ENCODE measurements at regions of chr7 and their contacts with region 1.

Region 1: DNA sequence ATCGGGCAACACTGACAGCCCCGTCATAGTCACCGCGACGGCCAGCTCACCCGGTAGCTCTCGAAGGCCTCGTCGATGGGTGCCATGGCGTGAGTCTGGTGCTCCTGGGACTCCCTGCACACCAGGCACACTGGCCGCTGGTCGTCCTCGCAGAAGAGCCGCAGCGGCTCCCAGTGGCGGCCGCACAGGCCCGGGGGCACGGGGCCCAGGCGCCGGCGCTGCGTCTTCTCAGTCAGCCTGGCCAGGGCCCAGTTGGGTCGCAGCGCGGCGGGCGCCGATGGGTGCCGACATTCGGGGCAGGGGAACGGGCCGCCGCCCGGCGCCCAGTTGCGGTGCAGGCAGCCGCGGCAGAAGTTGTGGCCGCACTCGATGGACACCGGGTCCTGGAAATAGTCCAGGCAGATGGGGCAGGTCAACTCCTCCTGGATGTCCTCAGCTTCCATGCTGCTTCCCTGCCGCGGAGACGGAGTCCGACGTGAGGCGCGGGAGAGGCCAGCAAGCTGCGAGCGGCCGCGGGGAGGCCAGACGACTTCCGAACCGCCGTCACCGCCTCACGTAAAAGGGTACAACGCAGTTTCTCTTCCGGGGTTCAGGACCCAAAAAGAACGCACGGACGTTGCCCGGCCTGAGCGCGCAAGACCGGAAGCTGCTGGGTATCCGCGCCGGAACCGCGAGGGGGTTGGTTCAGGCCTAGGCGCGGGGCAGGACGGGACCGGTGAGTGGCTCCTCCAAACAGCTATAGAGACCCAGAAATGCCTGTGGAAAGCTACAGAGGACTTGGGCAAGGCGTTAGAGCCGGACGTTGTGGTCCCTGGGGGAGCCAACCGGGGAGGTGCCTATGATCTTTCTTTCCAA is at the start of gene TRIM4:
- DNase-seq: peak; percentile 96
- H3K4me3 Mint-ChIP-seq: peak within 1 kb of the TSS; percentile 90
- H3K27ac Mint-ChIP-seq: peak within 1 kb of the TSS; percentile 93
- H3K4me1 Mint-ChIP-seq: peaks cover 38% of the 10 kb centered on the region
- H3K27me3 Mint-ChIP-seq: no peaks in the 10 kb centered on the region
- total RNA-seq, gene TRIM4: 25.7 to 25.8 TPM

Region 2: GRCh38 chr7:99504603-99505323 is 414.4 kb before region 1 on chr7 and contains the start of gene ZKSCAN5:
- CTCF ChIA-PET with region 1: interaction called, 3 read pairs
- intact Hi-C with region 1: loop called (anchors 2 kb)
- DNase-seq: peak; percentile 98
- H3K4me3 Mint-ChIP-seq: peak within 1 kb of the TSS; percentile 87
- H3K27ac Mint-ChIP-seq: peak within 1 kb of the TSS; percentile 98
- H3K4me1 Mint-ChIP-seq: peaks cover 25% of the 10 kb centered on the region
- H3K27me3 Mint-ChIP-seq: no peaks in the 10 kb centered on the region
- total RNA-seq, gene ZKSCAN5: 7.2 to 8.0 TPM

Region 3: GRCh38 chr7:99798972-99799371 is 120.2 kb before region 1 on chr7:
- CTCF ChIA-PET with region 1: no interaction called
- intact Hi-C with region 1: no loop called
- DNase-seq: no peak
- H3K4me3 Mint-ChIP-seq: no peak overlapping the region
- H3K27ac Mint-ChIP-seq: no peak overlapping the region
- H3K4me1 Mint-ChIP-seq: no peaks in the 10 kb centered on the region
- H3K27me3 Mint-ChIP-seq: peaks cover 18% of the 10 kb centered on the region

Region 4: DNA sequence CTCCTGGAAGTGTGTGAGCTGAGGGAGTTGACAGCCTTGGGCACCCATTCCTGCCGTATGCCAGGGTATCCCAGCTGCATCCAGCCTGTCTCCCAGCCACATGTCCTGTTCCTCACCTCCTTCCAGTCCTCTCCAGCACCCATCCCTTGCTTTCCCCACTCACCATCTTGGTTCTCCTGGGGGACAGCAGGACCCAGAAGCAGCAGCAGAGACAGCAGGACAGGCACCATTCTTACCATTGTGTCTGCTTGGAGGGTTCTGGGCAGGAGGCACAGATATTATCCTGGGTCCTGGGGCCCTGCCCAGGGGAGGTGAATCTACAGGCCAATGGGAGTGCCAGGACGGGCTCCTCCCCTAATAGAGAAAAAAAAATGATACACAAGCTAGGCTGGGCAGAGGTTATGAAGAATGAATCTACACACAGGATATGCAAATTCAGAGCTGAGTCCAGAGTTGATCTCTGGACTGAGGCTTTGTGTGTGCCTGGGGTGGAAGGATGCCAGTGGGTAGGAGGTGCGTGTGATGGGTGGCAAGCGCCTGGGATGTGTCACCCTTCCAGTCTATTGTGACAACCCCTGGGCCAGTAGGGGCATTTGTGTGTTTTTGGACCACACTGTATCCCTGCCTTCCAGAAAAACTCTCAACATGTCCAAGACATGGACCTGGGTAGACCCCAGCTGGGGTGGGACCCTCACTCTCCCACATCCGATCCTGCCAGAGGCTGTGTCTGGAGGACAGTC is 56.8 kb after region 1 on chr7 and contains the start of gene AZGP1:
- CTCF ChIA-PET with region 1: interaction called, 13 read pairs
- intact Hi-C with region 1: loop called (anchors 5 kb)
- DNase-seq: no peak
- H3K4me3 Mint-ChIP-seq: no peak within 1 kb of the TSS
- H3K27ac Mint-ChIP-seq: no peak within 1 kb of the TSS
- H3K4me1 Mint-ChIP-seq: no peaks in the 10 kb centered on the region
- H3K27me3 Mint-ChIP-seq: peaks cover 2% of the 10 kb centered on the region
- total RNA-seq, gene AZGP1: not detected

Region 5: DNA sequence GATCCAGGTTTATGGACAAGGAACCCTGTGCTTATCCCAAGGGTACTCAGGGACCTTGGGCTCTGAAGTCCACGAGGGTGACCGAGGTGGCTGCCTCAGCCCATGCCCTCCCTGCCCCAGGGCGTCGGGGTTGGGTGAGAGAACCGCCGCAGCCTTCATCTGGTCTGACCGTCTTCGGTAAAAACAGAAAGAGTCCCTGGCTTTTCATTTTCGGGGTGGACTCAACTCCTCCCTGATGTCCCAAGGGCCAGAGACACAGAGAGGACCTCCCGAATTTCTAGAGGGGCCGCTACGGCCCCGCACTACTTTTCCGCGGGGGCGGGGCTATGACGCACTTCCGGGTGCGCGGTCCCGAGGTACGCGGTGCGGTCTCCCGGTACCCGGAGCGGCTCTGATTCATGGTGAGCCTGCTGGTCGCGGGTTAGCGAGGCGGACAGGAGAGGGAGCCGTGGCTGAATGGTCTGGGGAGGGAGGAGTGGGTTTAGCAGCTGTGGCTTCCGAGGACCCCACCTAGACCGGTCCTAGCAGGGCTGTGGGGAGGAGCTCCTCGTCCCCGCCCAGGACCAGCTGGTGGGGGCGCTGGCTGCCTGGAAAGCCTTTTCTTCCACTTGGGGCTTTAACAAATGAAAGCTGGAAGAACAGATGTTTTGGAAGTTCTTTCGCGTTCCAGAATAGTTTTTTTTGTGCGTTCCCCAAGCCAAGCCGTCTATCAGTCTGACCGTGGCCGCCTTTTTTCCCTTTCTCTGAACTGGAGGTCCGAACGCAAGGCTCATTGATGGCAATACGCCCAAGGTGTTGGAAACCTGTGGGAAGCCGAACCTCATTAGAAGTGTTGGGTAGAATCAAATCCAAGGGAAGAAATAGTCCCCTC is 130.5 kb after region 1 on chr7 and contains the start of gene ZSCAN21:
- CTCF ChIA-PET with region 1: interaction called, 12 read pairs
- intact Hi-C with region 1: loop called (anchors 2 kb)
- DNase-seq: peak; percentile 85
- H3K4me3 Mint-ChIP-seq: peak within 1 kb of the TSS; percentile 85
- H3K27ac Mint-ChIP-seq: peak within 1 kb of the TSS; percentile 91
- H3K4me1 Mint-ChIP-seq: peaks cover 17% of the 10 kb centered on the region
- H3K27me3 Mint-ChIP-seq: no peaks in the 10 kb centered on the region
- total RNA-seq, gene ZSCAN21: 6.2 to 6.4 TPM

Region 6: GRCh38 chr7:100126931-100127865 is 208.0 kb after region 1 on chr7 and contains the start of gene MBLAC1:
- CTCF ChIA-PET with region 1: interaction called, 4 read pairs
- intact Hi-C with region 1: loop called (anchors 2 kb)
- DNase-seq: peak; percentile 94
- H3K4me3 Mint-ChIP-seq: peak within 1 kb of the TSS; percentile 100
- H3K27ac Mint-ChIP-seq: peak within 1 kb of the TSS; percentile 99
- H3K4me1 Mint-ChIP-seq: peaks cover 30% of the 10 kb centered on the region
- H3K27me3 Mint-ChIP-seq: no peaks in the 10 kb centered on the region
- total RNA-seq, gene MBLAC1: 2.3 to 2.9 TPM

Measured in activated naive CD4-positive, alpha-beta T cell treated with anti-CD3 and anti-CD28 coated beads for 36 hours (primary cell).